Posterior cingulate gyrus (tissue), 11 donors: ENCODE measurements at regions of chr10 and their contacts with region 1.

Region 1: GRCh38 chr10:102132563-102133372 is at the start of gene PPRC1:
- DNase-seq: peak; percentile 96 to 100 (median 99)

Region 2: DNA sequence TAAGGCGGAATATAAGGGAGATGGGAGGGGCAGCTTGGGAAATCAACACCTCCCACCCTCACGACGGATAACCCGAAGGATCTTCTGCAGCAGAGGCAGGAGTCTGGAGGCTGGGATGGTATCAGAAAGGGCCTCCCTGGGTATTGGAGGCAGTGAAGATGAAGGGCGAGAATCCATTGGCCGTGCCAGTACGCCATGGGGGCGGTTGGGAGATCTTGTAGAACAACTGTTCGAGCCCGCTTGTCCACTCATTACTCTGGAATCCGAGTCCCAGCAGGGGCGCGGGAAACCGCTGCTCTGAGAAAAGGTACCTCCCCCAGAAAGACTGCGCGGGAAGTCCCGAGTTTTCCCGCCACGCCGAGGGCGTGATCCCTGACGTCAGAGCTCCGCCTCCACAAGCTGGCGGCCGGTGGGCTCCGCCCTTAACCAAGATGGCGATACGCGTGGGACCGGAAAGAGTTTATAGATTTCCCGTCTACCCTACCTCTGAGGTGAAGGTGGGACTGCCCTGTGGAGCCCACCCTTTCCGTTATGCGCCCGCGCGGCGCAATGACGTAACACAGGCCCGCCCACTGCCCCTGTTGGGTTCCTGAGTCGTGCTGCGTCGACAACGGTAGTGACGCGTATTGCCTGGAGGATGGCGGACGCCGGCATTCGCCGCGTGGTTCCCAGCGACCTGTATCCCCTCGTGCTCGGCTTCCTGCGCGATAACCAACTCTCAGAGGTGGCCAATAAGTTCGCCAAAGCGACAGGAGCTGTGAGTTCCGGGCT is 19.2 kb after region 1 on chr10 and contains the start of gene NOLC1:
- intact Hi-C with region 1: loop called (anchors 1 kb)
- DNase-seq: peak; percentile 92 to 100 (median 99)